ENCODE measurements at regions of chr11 and their contacts with region 1.

Region 1: GRCh38 chr11:72585762-72586311 is 88.4 kb downstream of the PDE2A start:
- DNase-seq: peak; percentile 52 to 68 (median 59)
- H3K4me3 ChIP-seq: peak overlapping the region in 1 of 3 experiments; percentile 35
- H3K4me3 Mint-ChIP-seq: peak overlapping the region; percentile 37 to 65
- H3K27ac ChIP-seq: no peak overlapping the region
- H3K27ac Mint-ChIP-seq: peak overlapping the region in 5 of 7 donors; percentile 87 to 93 (median 89)
- H3K4me1 ChIP-seq: peaks cover 43 to 46% of the 10 kb centered on the region in 2 donors
- H3K4me1 Mint-ChIP-seq: peaks cover 56% of the 10 kb centered on the region
- H3K27me3 ChIP-seq: peaks cover 13 to 39% of the 10 kb centered on the region in 2 donors
- H3K27me3 Mint-ChIP-seq: peaks cover 49 to 74% (median 62%) of the 10 kb centered on the region in 3 donors
- CTCF ChIP-seq: peak; percentile 99

Region 2: DNA sequence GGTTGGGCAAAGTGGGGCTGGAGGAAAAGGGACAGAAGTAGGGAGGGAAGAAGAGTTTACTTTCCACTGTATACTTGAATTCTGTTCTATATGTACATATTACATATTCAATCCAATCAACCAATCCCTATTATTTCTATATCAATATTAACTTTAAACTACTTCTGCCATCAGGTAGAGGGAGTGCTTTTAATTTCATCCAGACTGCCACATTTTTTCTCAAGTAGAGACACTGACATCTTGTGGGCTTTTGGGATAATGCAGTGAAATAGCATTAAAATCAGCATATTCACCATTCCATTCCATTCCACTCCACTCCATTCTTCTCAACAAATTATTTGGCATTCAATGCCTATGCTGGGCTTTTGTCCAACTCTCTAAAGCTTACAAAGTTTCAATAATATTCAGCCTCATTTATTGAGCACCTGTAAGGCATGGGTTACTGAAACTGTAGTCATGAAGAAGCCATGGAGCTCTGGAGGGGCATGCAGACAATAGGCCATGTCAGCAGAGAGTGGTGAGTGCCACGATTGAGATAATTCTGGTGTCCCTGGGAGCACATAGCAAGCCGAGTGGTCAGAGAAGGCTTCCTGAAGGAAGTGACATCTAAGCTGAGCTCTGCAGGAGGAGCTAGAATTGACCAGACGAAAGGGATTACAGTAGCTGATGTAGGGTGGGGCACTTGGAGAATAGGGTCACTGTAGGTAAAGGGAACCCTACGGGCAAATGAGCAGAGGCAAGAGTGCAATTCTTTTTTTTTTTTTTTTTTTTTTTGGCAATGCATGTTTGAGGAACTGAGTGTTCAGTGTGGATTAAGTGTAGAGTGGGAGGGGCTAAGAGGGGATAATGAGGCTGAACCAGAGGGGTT is 138.7 kb before region 1 on chr11:
- intact Hi-C with region 1: no loop called
- DNase-seq: peak; percentile 42 to 51 (median 48)
- H3K4me3 ChIP-seq: peak overlapping the region in 1 of 3 experiments; percentile 27
- H3K4me3 Mint-ChIP-seq: peak overlapping the region; percentile 42 to 44
- H3K27ac ChIP-seq: peak overlapping the region in 1 of 2 donors; percentile 34
- H3K27ac Mint-ChIP-seq: peak overlapping the region; percentile 19 to 88 (median 75)
- H3K4me1 ChIP-seq: peaks cover 29 to 36% of the 10 kb centered on the region in 2 donors
- H3K4me1 Mint-ChIP-seq: peaks cover 40% of the 10 kb centered on the region
- H3K27me3 ChIP-seq: no peaks in the 10 kb centered on the region
- H3K27me3 Mint-ChIP-seq: peaks cover 0 to 7% (median 2%) of the 10 kb centered on the region in 3 donors
- CTCF ChIP-seq: peak; percentile 83

Region 3: GRCh38 chr11:72483412-72484186 is 102.2 kb before region 1 on chr11:
- intact Hi-C with region 1: loop called (anchors 5 kb)
- DNase-seq: peak; percentile 88 to 98 (median 96)
- H3K4me3 ChIP-seq: peak overlapping the region in 1 of 3 experiments; percentile 29
- H3K4me3 Mint-ChIP-seq: peak overlapping the region; percentile 37 to 78
- H3K27ac ChIP-seq: peak overlapping the region; percentile 84 to 89
- H3K27ac Mint-ChIP-seq: peak overlapping the region; percentile 84 to 97 (median 92)
- H3K4me1 ChIP-seq: peaks cover 32% of the 10 kb centered on the region in 2 donors
- H3K4me1 Mint-ChIP-seq: peaks cover 33% of the 10 kb centered on the region
- H3K27me3 ChIP-seq: no peaks in the 10 kb centered on the region
- H3K27me3 Mint-ChIP-seq: peaks cover 1 to 3% (median 2%) of the 10 kb centered on the region in 3 donors
- CTCF ChIP-seq: peak; percentile 34

Region 4: GRCh38 chr11:72642884-72643511 is 57.2 kb after region 1 on chr11:
- intact Hi-C with region 1: loop called (anchors 2 to 5 kb)
- DNase-seq: peak; percentile 47 to 66 (median 64)
- H3K4me3 ChIP-seq: peak overlapping the region in 2 of 3 experiments; percentile 14 to 67
- H3K4me3 Mint-ChIP-seq: peak overlapping the region; percentile 60 to 84
- H3K27ac ChIP-seq: no peak overlapping the region
- H3K27ac Mint-ChIP-seq: no peak overlapping the region
- H3K4me1 ChIP-seq: peaks cover 15 to 18% of the 10 kb centered on the region in 2 donors
- H3K4me1 Mint-ChIP-seq: peaks cover 6% of the 10 kb centered on the region
- H3K27me3 ChIP-seq: peaks cover 14 to 59% of the 10 kb centered on the region in 2 donors
- H3K27me3 Mint-ChIP-seq: peaks cover 24 to 35% (median 25%) of the 10 kb centered on the region in 3 donors
- CTCF ChIP-seq: peak; percentile 99

Measured in CD14-positive monocyte (primary cell).